Keratinocyte (primary cell): ENCODE measurements at regions of chr6 and their contacts with region 1.

Region 1: GRCh38 chr6:119110601-119111548 is 32.4 kb upstream of the FAM184A start:
- DNase-seq: peak; percentile 7
- H3K4me3 ChIP-seq: no peak overlapping the region
- H3K27ac ChIP-seq: no peak overlapping the region
- H3K4me1 ChIP-seq: no peaks in the 10 kb centered on the region
- H3K27me3 ChIP-seq: no peaks in the 10 kb centered on the region
- CTCF ChIP-seq: peak; percentile 38 to 57 (median 48)

Region 2: GRCh38 chr6:118968416-118968815 is 142.5 kb before region 1 on chr6:
- dilution Hi-C with region 1: loop called (anchors 25 kb)
- DNase-seq: no peak
- H3K4me3 ChIP-seq: no peak overlapping the region
- H3K27ac ChIP-seq: no peak overlapping the region
- H3K4me1 ChIP-seq: no peaks in the 10 kb centered on the region
- H3K27me3 ChIP-seq: no peaks in the 10 kb centered on the region
- CTCF ChIP-seq: peak in 1 of 3 experiments; percentile 3

Region 3: GRCh38 chr6:119205911-119206618 is 95.2 kb after region 1 on chr6:
- dilution Hi-C with region 1: no loop called
- DNase-seq: no peak
- H3K4me3 ChIP-seq: no peak overlapping the region
- H3K27ac ChIP-seq: no peak overlapping the region
- H3K4me1 ChIP-seq: no peaks in the 10 kb centered on the region
- H3K27me3 ChIP-seq: no peaks in the 10 kb centered on the region
- CTCF ChIP-seq: no peak